ENCODE measurements at regions of chr14 and their contacts with region 1.

Region 1: GRCh38 chr14:96100161-96101029 is 61.2 kb downstream of the C14orf132 start:
- DNase-seq: peak; percentile 78
- H3K4me3 Mint-ChIP-seq: no peak overlapping the region
- H3K27ac Mint-ChIP-seq: no peak overlapping the region
- H3K4me1 Mint-ChIP-seq: no peaks in the 10 kb centered on the region
- H3K27me3 Mint-ChIP-seq: no peaks in the 10 kb centered on the region

Region 2: DNA sequence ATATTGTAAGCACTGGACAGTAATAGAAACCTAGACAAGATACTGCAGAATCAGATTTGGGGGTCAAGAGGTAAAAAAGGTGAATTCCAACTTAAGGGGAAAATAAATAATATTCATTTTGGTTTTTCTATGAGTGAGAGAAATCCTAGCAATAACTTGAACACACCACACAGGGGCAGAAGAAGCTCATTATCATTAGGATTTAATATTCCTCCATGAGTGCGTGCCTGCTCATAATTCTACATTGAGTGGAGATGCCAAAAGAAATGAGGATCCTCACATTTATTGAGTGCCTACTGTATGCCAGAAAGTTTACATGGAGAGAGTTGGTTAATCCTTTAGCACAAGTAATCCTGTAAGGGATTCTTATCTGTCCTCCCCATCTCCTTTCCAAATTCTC is 101.7 kb before region 1 on chr14:
- CTCF ChIA-PET with region 1: no interaction called
- POLR2A ChIA-PET with region 1: no interaction called
- intact Hi-C with region 1: no loop called
- DNase-seq: no peak
- H3K4me3 Mint-ChIP-seq: no peak overlapping the region
- H3K27ac Mint-ChIP-seq: no peak overlapping the region
- H3K4me1 Mint-ChIP-seq: no peaks in the 10 kb centered on the region
- H3K27me3 Mint-ChIP-seq: peaks cover 37% of the 10 kb centered on the region

Region 3: DNA sequence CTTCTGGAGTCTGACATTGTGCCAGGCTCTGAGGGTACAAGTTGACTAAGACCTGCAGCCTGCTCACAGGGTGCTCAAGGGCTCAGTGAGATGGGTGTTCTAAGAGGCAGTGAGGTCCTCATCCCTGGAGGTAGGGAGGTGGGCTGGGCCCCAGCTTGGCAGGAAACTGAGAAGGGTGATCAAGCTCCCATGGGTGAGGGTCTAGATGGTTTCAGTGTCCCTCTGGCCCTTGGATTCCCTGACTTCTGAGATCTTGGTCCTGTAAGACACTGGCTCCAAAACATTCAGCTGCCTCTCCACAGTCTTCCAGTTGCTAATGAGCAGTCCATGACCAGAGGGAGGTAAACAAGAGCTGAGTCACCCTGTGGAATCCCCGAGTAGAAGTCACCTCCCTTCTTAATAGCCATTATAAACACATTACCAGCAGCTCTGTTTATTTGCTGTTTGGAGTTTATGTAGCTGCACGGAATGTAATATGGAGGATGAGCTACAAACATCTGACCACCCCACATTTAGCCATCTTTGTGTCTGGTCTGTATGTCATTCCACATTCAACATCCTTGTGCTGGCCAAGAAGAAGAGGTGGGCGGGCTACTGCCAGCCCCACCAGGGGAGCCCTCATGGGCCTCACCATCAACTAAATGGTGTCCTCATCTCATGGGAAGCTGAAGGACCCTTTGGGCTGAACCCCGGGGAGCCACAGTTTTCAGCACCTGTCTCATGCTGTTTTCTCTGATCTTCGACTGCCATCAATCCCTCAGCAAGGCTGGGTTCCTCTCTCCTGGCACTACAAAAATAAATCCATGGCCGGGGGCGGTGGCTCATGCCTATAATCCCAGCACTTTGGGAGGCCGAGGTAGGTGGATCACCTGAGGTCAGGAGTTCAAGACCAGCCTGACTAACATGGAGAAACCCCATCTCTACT is 67.1 kb after region 1 on chr14:
- CTCF ChIA-PET with region 1: no interaction called
- POLR2A ChIA-PET with region 1: no interaction called
- intact Hi-C with region 1: no loop called
- DNase-seq: no peak
- H3K4me3 Mint-ChIP-seq: no peak overlapping the region
- H3K27ac Mint-ChIP-seq: no peak overlapping the region
- H3K4me1 Mint-ChIP-seq: no peaks in the 10 kb centered on the region
- H3K27me3 Mint-ChIP-seq: no peaks in the 10 kb centered on the region

Region 4: DNA sequence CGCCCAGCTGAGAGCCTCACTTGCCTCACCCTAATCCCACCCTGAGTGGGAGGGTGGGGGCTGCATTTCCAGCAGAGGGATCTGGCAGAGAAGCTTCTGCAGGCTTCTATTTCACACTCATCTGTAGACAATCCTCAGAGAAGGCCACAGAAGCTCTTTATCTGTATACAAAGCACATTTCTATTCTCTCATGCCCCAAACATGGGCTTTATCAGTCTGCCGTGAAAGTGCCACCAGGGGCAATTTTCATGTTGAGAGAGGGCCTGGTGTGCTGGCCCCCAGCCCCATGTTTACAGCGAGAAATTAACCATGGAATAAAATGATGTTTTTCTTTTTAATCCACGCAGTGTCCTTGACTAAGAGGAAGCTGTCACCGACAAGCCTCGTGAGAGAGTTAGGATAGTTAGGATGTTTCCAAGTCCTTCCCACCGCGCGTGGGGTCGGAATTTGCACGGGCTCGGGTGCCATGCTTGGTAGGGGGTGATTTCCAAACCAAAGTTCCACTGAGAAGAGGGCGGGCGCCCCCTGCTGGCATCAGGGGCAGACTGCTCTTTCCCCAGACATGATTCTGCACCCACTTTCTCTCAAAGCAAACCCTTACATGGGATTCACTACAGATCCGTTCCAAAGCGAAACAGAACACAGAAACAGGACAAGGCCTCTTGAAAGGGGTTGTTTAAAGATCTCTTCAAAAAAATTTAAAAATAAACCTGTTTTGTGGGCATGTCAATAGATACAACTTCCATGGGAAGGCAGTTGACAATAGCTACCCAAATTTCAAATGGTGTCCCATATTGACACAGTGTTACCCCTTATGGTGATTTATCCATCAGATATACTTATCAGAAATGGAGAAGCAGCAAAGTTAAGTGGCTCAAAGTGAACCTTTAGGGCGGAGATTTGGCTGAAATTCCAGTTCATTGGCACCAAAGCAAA is 175.1 kb after region 1 on chr14:
- CTCF ChIA-PET with region 1: interaction called, 61 read pairs
- POLR2A ChIA-PET with region 1: no interaction called
- intact Hi-C with region 1: loop called (anchors 1 kb)
- DNase-seq: peak; percentile 78
- H3K4me3 Mint-ChIP-seq: no peak overlapping the region
- H3K27ac Mint-ChIP-seq: no peak overlapping the region
- H3K4me1 Mint-ChIP-seq: no peaks in the 10 kb centered on the region
- H3K27me3 Mint-ChIP-seq: no peaks in the 10 kb centered on the region